Activated CD8-positive, alpha-beta memory T cell treated with anti-CD3 and anti-CD28 coated beads, Interleukin-2, amount 10 ng/mL, durations not matched to agents 7 days and 5 days (primary cell): ENCODE measurements at regions of chr2 and their contacts with region 1.

Region 1: GRCh38 chr2:231612179-231613053 is 19.8 kb downstream of the TEX44 start:
- DNase-seq: peak; percentile 97
- ATAC-seq: peak; percentile 73
- H3K4me3 Mint-ChIP-seq: peak overlapping the region; percentile 50
- H3K27ac Mint-ChIP-seq: peak overlapping the region; percentile 96
- H3K4me1 Mint-ChIP-seq: peaks cover 32% of the 10 kb centered on the region
- H3K27me3 Mint-ChIP-seq: no peaks in the 10 kb centered on the region

Region 2: DNA sequence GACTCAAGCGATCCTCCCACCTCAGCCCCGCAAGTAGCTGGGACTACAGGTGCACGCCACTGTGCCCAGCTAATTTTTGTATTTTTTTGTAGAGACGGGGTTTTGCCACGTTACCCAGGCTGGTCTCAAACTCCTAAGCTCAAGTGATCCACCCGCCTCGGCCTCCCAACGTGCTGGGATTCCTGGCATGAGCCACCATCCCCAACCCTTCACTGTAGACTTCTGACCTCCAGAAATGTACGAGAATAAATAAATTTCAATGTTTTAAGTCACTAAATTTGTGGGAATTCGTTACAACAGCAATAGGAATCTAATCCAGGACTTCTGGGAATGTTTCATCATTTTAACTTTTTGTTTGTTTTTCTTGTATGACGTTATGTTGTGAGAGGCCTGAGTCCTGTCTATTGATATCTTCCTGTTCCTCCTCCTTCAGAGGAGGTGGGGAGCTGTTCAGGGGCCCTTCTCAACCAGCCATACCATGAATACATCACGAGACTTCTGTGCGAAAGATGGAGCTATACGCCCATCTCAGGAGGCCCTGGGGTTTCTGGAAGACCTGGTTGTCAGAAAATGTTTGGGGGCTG is 20.2 kb after region 1 on chr2:
- CTCF ChIA-PET with region 1: interaction called, 11 read pairs
- DNase-seq: no peak
- ATAC-seq: no peak
- H3K4me3 Mint-ChIP-seq: no peak overlapping the region
- H3K27ac Mint-ChIP-seq: no peak overlapping the region
- H3K4me1 Mint-ChIP-seq: peaks cover 6% of the 10 kb centered on the region
- H3K27me3 Mint-ChIP-seq: no peaks in the 10 kb centered on the region

Region 3: GRCh38 chr2:231680992-231681853 is 68.8 kb after region 1 on chr2:
- CTCF ChIA-PET with region 1: interaction called, 261 read pairs
- DNase-seq: no peak
- ATAC-seq: peak; percentile 20
- H3K4me3 Mint-ChIP-seq: no peak overlapping the region
- H3K27ac Mint-ChIP-seq: no peak overlapping the region
- H3K4me1 Mint-ChIP-seq: peaks cover 5% of the 10 kb centered on the region
- H3K27me3 Mint-ChIP-seq: peaks cover 20% of the 10 kb centered on the region

Region 4: DNA sequence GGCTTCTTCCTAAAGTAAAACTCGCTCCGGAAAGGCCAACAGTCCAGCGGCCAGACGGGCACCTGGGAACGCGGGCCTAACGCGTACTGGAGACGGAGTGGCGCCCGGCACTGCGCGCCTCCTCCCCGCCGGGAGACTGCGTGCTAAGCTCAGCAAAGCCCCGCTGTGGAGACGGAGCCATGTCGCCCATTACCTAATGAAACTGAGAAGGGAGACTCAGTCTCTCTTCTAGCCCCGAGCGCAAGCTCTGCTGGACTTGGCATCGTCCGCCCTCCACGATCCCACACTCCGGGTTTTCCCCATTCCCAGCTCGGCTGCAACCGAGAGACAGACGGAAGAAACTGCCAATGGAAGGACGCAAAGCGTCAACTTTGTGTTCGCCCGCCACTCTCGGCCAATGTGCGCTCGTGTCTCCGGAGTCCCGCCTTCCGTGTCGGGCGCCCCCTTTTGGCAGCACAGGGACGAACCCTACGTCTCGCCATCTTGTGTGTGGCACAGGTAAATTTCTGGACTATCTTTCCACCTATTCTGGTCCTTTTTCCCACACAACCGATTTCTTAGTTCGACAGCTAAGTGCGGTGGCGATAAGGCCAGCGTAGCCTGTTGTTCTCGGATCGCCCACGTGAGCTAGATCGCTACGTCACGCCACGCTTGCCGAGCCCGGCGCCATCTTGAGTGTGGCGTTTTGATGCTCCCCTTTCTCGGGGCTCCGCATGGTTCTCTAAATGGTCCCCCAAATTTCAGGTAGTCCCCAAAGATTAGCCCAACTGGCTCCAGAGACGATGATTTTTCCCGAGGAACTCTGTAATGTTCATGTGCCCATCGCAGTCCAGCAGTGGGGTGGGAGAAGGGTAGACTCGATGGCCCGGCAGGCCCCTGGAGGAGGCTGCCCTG is 94.6 kb after region 1 on chr2:
- CTCF ChIA-PET with region 1: interaction called, 182 read pairs
- DNase-seq: peak; percentile 98
- ATAC-seq: peak; percentile 43
- H3K4me3 Mint-ChIP-seq: peak overlapping the region; percentile 93
- H3K27ac Mint-ChIP-seq: peak overlapping the region; percentile 99
- H3K4me1 Mint-ChIP-seq: peaks cover 19% of the 10 kb centered on the region
- H3K27me3 Mint-ChIP-seq: peaks cover 2% of the 10 kb centered on the region